GM12878 (cell line): ENCODE measurements at regions of chr21 and their contacts with region 1.

Region 1: GRCh38 chr21:45880097-45881068 is 101.2 kb upstream of the COL6A1 start:
- DNase-seq: no peak
- ATAC-seq: peak; percentile 98
- H3K4me3 ChIP-seq: no peak overlapping the region
- H3K27ac ChIP-seq: no peak overlapping the region
- H3K4me1 ChIP-seq: no peaks in the 10 kb centered on the region
- H3K27me3 ChIP-seq: no peaks in the 10 kb centered on the region; a peak in 1 of 4 replicates
- CTCF ChIP-seq: peak; percentile 65 to 70 (median 65)
- EP300 ChIP-seq: no peak
- POLR2A ChIP-seq: no peak
- RAD21 ChIP-seq: no peak

Region 2: GRCh38 chr21:45846373-45847160 is 33.8 kb before region 1 on chr21:
- CTCF ChIA-PET with region 1: interaction called, 37 read pairs
- POLR2A ChIA-PET with region 1: no interaction called
- RAD21 ChIA-PET with region 1: interaction called, 4 read pairs
- SMC1A ChIA-PET with region 1: no interaction called
- in situ Hi-C with region 1: no loop called
- intact Hi-C with region 1: no loop called
- DNase-seq: no peak
- ATAC-seq: peak; percentile 60
- H3K4me3 ChIP-seq: no peak overlapping the region
- H3K27ac ChIP-seq: no peak overlapping the region
- H3K4me1 ChIP-seq: peaks cover 3% of the 10 kb centered on the region; the same call in 1 of the 2 replicates
- H3K27me3 ChIP-seq: no peaks in the 10 kb centered on the region
- CTCF ChIP-seq: no peak
- EP300 ChIP-seq: no peak
- POLR2A ChIP-seq: no peak
- RAD21 ChIP-seq: no peak